Activated CD8-positive, alpha-beta memory T cell treated with anti-CD3 and anti-CD28 coated beads, Interleukin-2, amount 10 ng/mL, durations not matched to agents 7 days and 5 days (primary cell): ENCODE measurements at regions of chr10 and their contacts with region 1.

Region 1: GRCh38 chr10:69408318-69409175 is 8.2 kb downstream of the TACR2 start:
- DNase-seq: peak; percentile 94
- ATAC-seq: peak; percentile 94
- H3K4me3 Mint-ChIP-seq: peak overlapping the region; percentile 54
- H3K27ac Mint-ChIP-seq: peak overlapping the region; percentile 77
- H3K4me1 Mint-ChIP-seq: peaks cover 18% of the 10 kb centered on the region
- H3K27me3 Mint-ChIP-seq: no peaks in the 10 kb centered on the region

Region 2: DNA sequence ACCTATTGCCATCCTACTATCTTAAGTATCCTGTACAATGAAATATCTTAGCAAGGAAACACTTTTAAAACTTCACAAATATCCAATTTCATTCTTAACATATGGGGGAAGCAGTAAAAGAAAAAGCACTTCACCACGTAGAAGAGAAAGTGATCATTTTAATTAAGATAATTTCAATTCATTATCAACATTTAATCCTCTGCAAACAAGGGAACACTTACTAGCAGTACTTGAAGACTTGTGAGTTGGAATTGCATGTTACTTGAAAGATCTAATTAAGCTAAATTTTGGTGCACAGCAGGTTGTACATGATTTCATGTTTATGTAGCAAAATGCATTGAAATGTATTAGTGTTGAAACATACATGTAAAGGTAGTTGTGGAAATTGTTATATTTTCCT is 708.4 kb before region 1 on chr10:
- CTCF ChIA-PET with region 1: no interaction called
- DNase-seq: no peak
- ATAC-seq: no peak
- H3K4me3 Mint-ChIP-seq: no peak overlapping the region
- H3K27ac Mint-ChIP-seq: no peak overlapping the region
- H3K4me1 Mint-ChIP-seq: peaks cover 2% of the 10 kb centered on the region
- H3K27me3 Mint-ChIP-seq: no peaks in the 10 kb centered on the region

Region 3: DNA sequence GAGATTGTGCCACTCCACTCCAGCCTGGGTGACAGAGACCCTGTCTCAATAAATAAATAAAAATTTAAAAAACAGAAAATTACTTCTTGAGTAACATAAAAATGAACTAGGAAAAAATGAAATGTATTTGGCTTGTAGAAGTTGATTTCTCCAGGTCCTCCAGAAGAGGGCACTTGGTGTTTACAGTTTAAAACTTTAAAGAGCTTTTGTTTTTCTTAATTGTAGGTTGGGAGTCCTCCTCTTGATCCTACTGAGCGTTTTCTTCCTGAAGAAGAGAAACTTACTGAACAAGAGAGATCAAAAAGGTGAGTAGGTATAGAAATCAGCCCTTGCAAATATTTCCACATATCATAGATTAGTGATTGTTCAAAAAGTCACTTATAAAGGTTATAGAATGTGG is 403.7 kb before region 1 on chr10:
- CTCF ChIA-PET with region 1: interaction called, 12 read pairs
- DNase-seq: no peak
- ATAC-seq: peak; percentile 61
- H3K4me3 Mint-ChIP-seq: no peak overlapping the region
- H3K27ac Mint-ChIP-seq: no peak overlapping the region
- H3K4me1 Mint-ChIP-seq: peaks cover 8% of the 10 kb centered on the region
- H3K27me3 Mint-ChIP-seq: no peaks in the 10 kb centered on the region

Region 4: DNA sequence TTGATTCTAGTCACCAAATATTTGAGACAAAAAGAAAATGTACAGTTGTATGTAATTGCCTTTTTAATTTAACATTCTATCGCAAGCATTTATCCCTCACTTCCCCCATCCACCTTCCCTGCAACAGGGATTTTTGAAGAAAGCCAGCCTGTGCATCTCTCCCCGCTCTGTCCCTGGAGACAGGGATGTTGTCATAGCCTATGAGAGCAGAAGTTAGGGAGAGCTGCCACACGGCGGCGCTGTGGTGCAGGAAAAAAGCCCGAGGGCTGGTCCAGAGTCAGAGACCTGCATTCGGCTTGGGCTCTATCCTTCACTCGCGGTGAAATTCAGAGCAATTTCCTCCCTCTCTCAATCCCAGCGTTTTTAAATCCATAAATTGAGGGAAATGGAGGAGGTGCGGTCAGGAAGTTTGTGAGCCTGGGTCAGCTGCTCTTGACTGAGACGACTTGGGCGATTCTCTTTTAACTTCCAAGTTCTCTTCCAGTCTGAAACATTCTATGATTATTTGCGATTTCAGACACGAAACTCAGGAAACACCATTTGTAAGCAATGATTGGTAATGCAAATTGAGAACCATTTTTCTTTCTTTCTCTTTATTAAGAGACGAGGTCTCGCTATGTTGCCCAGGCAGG is 170.9 kb before region 1 on chr10:
- CTCF ChIA-PET with region 1: interaction called, 44 read pairs
- DNase-seq: peak; percentile 92
- ATAC-seq: peak; percentile 99
- H3K4me3 Mint-ChIP-seq: no peak overlapping the region
- H3K27ac Mint-ChIP-seq: peak overlapping the region; percentile 20
- H3K4me1 Mint-ChIP-seq: peaks cover 48% of the 10 kb centered on the region
- H3K27me3 Mint-ChIP-seq: no peaks in the 10 kb centered on the region

Region 5: GRCh38 chr10:69383558-69383957 is 25.0 kb before region 1 on chr10:
- CTCF ChIA-PET with region 1: interaction called, 11 read pairs
- DNase-seq: no peak
- ATAC-seq: no peak
- H3K4me3 Mint-ChIP-seq: no peak overlapping the region
- H3K27ac Mint-ChIP-seq: no peak overlapping the region
- H3K4me1 Mint-ChIP-seq: peaks cover 3% of the 10 kb centered on the region
- H3K27me3 Mint-ChIP-seq: no peaks in the 10 kb centered on the region

Region 6: DNA sequence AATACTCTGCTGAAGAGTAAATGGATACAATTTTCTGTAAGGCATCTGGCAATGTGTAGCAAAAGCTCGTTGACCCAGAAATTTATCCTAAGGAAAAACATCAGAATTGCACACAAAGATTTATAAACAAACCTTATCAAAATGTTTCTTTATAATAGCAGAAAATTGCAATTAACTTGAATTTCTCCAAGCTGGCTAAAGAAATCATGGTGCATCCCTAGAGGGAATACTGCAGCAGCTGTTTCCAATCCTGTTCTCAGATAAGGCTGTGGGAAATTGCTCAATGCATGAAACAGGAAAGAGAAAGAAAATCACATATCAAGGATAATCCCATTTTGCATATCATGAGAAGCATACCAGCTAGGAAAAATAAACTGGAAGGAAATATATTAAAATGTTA is 10.6 kb before region 1 on chr10:
- CTCF ChIA-PET with region 1: interaction called, 24 read pairs
- DNase-seq: no peak
- ATAC-seq: no peak
- H3K4me3 Mint-ChIP-seq: no peak overlapping the region
- H3K27ac Mint-ChIP-seq: no peak overlapping the region
- H3K4me1 Mint-ChIP-seq: no peaks in the 10 kb centered on the region
- H3K27me3 Mint-ChIP-seq: no peaks in the 10 kb centered on the region

Region 7: GRCh38 chr10:69451209-69451783 is 42.7 kb after region 1 on chr10 and contains the start of gene TSPAN15:
- CTCF ChIA-PET with region 1: interaction called, 14 read pairs
- DNase-seq: peak; percentile 84
- ATAC-seq: peak; percentile 94
- H3K4me3 Mint-ChIP-seq: peak within 1 kb of the TSS; percentile 73
- H3K27ac Mint-ChIP-seq: no peak within 1 kb of the TSS
- H3K4me1 Mint-ChIP-seq: peaks cover 28% of the 10 kb centered on the region
- H3K27me3 Mint-ChIP-seq: peaks cover 17% of the 10 kb centered on the region
- total RNA-seq, gene TSPAN15: 2.5 to 4.2 TPM

Region 8: GRCh38 chr10:69506834-69507721 is 98.5 kb after region 1 on chr10:
- CTCF ChIA-PET with region 1: interaction called, 38 read pairs
- DNase-seq: no peak
- ATAC-seq: no peak
- H3K4me3 Mint-ChIP-seq: peak overlapping the region; percentile 58
- H3K27ac Mint-ChIP-seq: peak overlapping the region; percentile 53
- H3K4me1 Mint-ChIP-seq: peaks cover 10% of the 10 kb centered on the region
- H3K27me3 Mint-ChIP-seq: peaks cover 22% of the 10 kb centered on the region

Region 9: GRCh38 chr10:69549959-69550358 is 141.4 kb after region 1 on chr10:
- CTCF ChIA-PET with region 1: no interaction called
- DNase-seq: no peak
- ATAC-seq: no peak
- H3K4me3 Mint-ChIP-seq: no peak overlapping the region
- H3K27ac Mint-ChIP-seq: no peak overlapping the region
- H3K4me1 Mint-ChIP-seq: no peaks in the 10 kb centered on the region
- H3K27me3 Mint-ChIP-seq: peaks cover 29% of the 10 kb centered on the region